ENCODE measurements at regions of chr3 and their contacts with region 1.

Region 1: GRCh38 chr3:108090701-108091451 is at the start of gene CD47:
- DNase-seq: peak; percentile 97
- H3K4me3 ChIP-seq: peak within 1 kb of the TSS; percentile 75 to 99 (median 93)
- H3K27ac ChIP-seq: peak within 1 kb of the TSS; percentile 88 to 95 (median 92)
- H3K4me1 ChIP-seq: peaks cover 0 to 34% (median 4%) of the 10 kb centered on the region in 4 donors
- H3K27me3 ChIP-seq: no peaks in the 10 kb centered on the region
- CTCF ChIP-seq: no peak
- EP300 ChIP-seq: no peak
- POLR2A ChIP-seq: peak in 1 of 2 donors; percentile 49
- total RNA-seq, gene CD47: 52.1 to 67.1 (median 62.0) TPM

Region 2: DNA sequence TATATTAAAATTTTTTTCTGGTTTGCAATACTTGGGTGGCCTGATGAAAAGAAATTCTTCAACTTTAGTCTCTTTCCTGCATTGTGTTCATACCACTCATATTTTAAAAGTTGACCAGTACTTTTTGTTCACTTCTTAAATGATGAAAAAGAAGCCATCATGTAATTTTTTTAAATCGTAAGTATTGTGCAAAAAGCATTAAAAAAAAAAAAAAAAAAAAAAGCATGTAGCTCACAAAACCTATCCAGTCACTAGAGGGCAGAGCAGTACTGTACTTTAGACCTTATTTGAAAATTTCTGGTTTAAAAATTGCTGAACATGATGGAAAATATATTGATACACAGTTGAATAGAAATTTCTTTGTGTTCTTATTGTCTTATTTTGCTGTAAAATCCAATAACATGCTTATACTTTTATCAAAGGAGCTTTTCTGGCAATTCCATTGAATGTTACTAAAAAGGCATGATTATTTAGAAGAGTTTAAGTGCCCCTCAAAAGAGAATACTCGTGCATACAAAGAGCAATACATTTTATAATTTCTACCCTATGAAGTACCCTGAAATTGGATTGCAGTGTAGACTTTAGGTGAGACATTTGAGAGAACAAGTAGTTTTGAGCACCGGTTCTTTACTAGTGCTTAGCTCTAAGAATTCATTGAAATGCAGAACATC is 430.4 kb before region 1 on chr3:
- intact Hi-C with region 1: loop called (anchors 5 kb)
- DNase-seq: no peak
- H3K4me3 ChIP-seq: no peak overlapping the region
- H3K27ac ChIP-seq: no peak overlapping the region
- H3K4me1 ChIP-seq: peaks cover 0 to 42% (median 18%) of the 10 kb centered on the region in 4 donors
- H3K27me3 ChIP-seq: no peaks in the 10 kb centered on the region
- CTCF ChIP-seq: peak; percentile 25 to 50 (median 38)
- EP300 ChIP-seq: no peak
- POLR2A ChIP-seq: no peak

Region 3: DNA sequence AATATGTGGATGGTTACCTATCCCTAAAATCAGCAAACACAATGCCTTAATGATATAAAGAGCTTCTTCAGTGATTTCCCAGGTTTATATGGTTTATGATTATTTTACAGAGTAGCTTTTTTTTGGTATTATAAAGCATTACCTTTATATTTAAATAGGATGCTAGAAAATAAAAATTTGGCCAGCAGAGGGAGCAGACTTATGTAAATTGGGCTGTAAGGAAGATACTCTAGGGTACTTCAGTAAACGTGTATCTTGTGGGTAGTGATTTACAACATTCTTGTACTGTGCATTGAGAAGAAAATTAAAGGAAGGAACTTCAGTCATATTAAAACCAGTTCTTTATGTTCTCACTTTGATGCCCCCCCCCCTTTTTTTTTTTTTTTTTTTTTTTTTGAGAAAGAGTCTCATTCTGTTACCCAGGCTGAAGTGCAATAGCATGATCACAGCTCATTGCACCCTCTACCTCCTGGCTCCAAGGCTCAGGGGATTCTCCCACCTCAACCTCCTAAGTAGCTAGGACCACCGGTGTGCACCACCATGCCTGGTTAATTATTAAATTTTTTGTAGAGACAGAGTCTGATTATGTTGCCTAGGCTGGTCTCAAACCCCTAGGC is 400.2 kb before region 1 on chr3:
- intact Hi-C with region 1: no loop called
- DNase-seq: no peak
- H3K4me3 ChIP-seq: no peak overlapping the region
- H3K27ac ChIP-seq: no peak overlapping the region
- H3K4me1 ChIP-seq: peaks cover 0 to 4% (median 0%) of the 10 kb centered on the region in 4 donors
- H3K27me3 ChIP-seq: no peaks in the 10 kb centered on the region
- CTCF ChIP-seq: peak; percentile 7 to 49 (median 17)
- EP300 ChIP-seq: no peak
- POLR2A ChIP-seq: no peak

Region 4: DNA sequence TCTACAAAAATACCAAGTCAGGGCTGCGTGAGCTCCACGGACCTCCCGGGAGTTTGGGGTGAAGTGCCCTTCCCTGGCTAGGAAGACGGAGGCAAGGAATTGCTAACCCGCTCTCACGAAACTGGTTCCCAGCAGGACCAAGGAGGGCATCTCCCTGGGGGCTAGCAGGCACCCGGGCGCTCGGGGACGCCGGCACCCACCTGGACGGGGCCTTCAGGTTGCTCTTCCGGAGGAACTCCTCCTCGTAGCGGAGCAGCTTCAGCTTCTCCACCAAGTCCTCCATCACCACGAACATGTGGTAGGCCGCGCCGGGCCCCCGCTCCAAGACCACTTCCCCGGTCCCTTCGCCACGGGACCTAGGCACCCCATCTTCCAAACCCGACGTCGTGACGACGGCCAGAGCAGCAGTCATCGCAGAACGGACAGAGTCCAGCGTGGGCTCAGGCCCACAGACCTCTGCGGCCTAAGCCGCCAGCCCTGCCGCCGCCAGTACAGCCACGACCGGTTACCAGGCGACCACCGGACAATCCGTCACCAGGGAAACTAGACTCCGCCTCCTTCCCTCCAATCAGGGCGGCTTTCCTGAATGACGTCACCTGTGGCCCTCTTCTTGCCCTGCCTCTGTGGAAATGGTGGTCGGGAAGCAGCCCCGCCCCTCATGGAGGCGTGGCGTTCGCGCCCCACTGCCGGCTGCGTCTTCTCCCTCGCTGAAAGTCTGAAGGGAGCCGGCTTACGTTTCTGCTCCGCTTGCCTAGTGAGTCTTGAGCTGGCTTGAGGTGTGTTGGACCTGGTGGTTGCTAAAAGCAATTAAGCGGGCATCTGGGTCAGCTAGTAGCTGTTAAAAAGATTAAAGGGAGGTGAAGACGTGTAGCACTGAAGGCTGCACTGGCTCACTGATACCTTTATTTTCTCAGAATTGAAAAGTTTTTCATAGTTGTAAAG is 131.3 kb after region 1 on chr3 and contains the start of gene IFT57:
- intact Hi-C with region 1: loop called (anchors 2 kb)
- DNase-seq: peak; percentile 99
- H3K4me3 ChIP-seq: peak within 1 kb of the TSS; percentile 78 to 86 (median 82)
- H3K27ac ChIP-seq: peak within 1 kb of the TSS; percentile 80 to 84 (median 82)
- H3K4me1 ChIP-seq: peaks cover 0 to 33% (median 19%) of the 10 kb centered on the region in 4 donors
- H3K27me3 ChIP-seq: no peaks in the 10 kb centered on the region
- CTCF ChIP-seq: no peak
- EP300 ChIP-seq: no peak
- POLR2A ChIP-seq: peak; percentile 26 to 57
- total RNA-seq, gene IFT57: 38.8 to 49.6 (median 44.0) TPM

Measured in sigmoid colon (tissue), 7 donors.